A673 (cell line): ENCODE measurements at regions of chr16 and their contacts with region 1.

Region 1: GRCh38 chr16:85172455-85173145 is 60.3 kb upstream of the CIBAR2 start:
- DNase-seq: peak; percentile 77
- H3K4me3 ChIP-seq: peak overlapping the region; percentile 53
- H3K27ac ChIP-seq: peak overlapping the region; percentile 80
- H3K4me1 ChIP-seq: peaks cover 76% of the 10 kb centered on the region
- H3K27me3 ChIP-seq: no peaks in the 10 kb centered on the region
- CTCF ChIP-seq: peak; percentile 71

Region 2: GRCh38 chr16:85126705-85127419 is 45.7 kb before region 1 on chr16:
- CTCF ChIA-PET with region 1: no interaction called
- POLR2A ChIA-PET with region 1: no interaction called
- intact Hi-C with region 1: no loop called
- DNase-seq: peak; percentile 86
- H3K4me3 ChIP-seq: peak overlapping the region; percentile 25
- H3K27ac ChIP-seq: peak overlapping the region; percentile 86
- H3K4me1 ChIP-seq: peaks cover 32% of the 10 kb centered on the region
- H3K27me3 ChIP-seq: no peaks in the 10 kb centered on the region
- CTCF ChIP-seq: no peak

Region 3: DNA sequence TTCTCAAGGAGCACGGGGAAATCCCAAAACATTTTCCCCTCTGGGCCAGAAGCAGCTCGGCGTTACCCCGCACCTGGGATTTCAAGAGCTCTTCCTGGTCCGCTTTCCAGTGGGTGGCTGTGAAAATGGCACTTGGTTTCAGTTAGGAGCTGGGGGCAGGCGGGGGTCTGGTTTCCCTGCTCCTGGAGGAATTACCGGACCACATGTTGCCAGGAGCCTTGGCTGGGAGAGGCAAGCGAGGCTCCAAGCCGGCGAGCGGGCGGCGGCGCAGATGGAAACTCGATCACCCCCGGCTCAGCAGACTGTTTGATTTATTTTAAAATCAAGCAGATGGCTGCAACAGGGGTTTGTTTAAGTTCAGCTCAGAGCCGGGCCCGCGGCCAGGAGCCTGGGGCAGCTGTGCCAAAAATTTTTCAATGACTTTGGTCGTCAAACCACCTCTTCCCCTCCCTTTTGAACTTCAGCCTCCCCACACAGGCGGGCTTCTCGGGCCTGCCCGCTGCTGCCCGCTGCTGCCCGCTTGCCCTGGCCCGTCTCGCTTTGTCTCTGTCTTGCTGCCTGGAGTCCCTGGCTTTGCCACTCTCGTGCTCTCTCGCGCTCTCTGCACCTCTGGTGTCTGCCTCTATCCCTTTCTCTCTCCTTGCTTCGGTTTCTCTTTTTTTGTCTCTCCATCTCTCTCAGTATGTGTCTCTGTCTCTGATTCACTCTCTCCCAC is 47.7 kb after region 1 on chr16:
- CTCF ChIA-PET with region 1: no interaction called
- POLR2A ChIA-PET with region 1: no interaction called
- intact Hi-C with region 1: loop called (anchors 5 kb)
- DNase-seq: peak; percentile 79
- H3K4me3 ChIP-seq: peak overlapping the region; percentile 10
- H3K27ac ChIP-seq: peak overlapping the region; percentile 91
- H3K4me1 ChIP-seq: peaks cover 42% of the 10 kb centered on the region
- H3K27me3 ChIP-seq: no peaks in the 10 kb centered on the region
- CTCF ChIP-seq: no peak

Region 4: GRCh38 chr16:85234310-85235204 is 62.0 kb after region 1 on chr16:
- CTCF ChIA-PET with region 1: no interaction called
- POLR2A ChIA-PET with region 1: no interaction called
- intact Hi-C with region 1: loop called (anchors 5 kb)
- DNase-seq: peak; percentile 93
- H3K4me3 ChIP-seq: peak overlapping the region; percentile 55
- H3K27ac ChIP-seq: peak overlapping the region; percentile 85
- H3K4me1 ChIP-seq: peaks cover 65% of the 10 kb centered on the region
- H3K27me3 ChIP-seq: no peaks in the 10 kb centered on the region
- CTCF ChIP-seq: no peak

Region 5: GRCh38 chr16:85402910-85403692 is 230.5 kb after region 1 on chr16:
- CTCF ChIA-PET with region 1: no interaction called
- POLR2A ChIA-PET with region 1: no interaction called
- intact Hi-C with region 1: no loop called
- DNase-seq: peak; percentile 89
- H3K4me3 ChIP-seq: no peak overlapping the region
- H3K27ac ChIP-seq: peak overlapping the region; percentile 67
- H3K4me1 ChIP-seq: peaks cover 23% of the 10 kb centered on the region
- H3K27me3 ChIP-seq: no peaks in the 10 kb centered on the region
- CTCF ChIP-seq: no peak

Region 6: DNA sequence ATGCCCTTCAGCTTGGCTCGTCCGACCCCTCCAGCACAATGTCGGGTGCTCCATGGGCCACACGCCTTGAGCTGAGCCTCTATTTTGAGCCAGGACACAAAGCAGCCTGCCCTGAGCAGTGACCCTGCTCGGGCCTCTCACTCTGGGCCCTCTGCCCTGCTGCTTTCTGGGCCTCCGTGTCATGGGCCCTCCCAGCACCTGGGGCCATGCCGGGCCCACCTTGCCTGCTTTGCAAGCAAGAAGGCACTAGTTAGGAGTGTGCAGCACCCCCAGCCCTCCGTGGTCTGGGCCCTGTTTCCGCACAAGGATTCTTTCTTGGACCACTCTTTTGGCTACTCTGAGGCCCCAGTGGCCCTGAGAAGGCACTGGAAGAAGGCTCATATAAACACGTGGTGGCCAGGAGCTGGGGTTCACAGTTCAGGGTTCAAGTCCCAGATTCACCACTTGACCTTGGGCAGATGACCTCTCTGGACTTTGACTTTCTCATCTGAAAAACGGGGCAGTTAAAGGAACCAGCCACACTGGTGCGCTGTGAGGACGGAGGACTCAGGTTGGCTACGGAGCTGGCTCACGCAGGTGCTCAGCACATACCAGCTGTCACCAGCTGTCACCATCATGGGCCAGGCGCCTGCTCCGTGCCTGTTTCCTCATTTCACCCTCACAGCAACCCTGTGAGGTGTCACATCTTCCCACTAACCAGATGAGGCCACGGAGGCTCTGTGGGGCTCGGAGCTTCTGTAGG is 274.5 kb after region 1 on chr16:
- CTCF ChIA-PET with region 1: no interaction called
- POLR2A ChIA-PET with region 1: no interaction called
- intact Hi-C with region 1: no loop called
- DNase-seq: no peak
- H3K4me3 ChIP-seq: no peak overlapping the region
- H3K27ac ChIP-seq: no peak overlapping the region
- H3K4me1 ChIP-seq: peaks cover 6% of the 10 kb centered on the region
- H3K27me3 ChIP-seq: no peaks in the 10 kb centered on the region
- CTCF ChIP-seq: no peak